WTC11 (cell line): ENCODE measurements at regions of chr9 and their contacts with region 1.

Region 1: DNA sequence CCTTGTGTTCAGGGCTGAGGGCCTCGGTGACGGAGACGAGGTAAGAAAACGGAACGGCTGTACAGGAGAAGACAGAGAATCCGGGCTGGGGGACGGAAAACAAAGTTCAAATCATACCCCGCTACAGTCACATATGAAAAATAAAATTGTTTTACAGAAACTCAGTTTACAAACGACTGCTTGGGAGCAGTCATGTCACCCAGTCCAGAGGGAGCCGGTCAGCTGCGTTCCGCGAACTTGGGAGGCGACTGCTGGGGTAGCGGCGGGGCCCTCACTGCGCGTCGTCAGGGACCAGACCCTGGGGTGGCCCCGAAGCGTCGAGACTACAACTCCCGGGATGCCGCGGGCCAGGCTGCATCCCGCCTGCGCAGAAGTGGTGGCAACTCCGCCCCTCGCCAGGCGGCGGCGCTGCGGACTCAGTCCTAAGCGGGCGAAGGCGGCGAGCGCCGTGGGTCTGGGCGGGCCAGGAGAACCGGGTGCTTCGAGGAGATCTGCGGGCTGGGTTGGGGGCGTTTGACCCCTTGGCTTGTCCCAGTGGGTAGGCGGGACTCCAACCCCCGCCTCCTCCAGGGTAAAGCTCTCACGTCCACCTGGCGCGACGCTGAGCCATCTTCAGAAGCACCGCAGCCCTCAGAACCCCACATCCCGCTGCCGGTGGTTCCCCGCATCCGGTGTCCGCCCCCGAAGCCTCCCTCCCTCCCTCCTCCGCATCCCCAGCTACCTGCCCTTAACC is 4.0 kb downstream of the SIT1 start:
- DNase-seq: peak; percentile 96
- ATAC-seq: peak; percentile 89
- H3K4me3 Mint-ChIP-seq: peak overlapping the region; percentile 88
- H3K27ac Mint-ChIP-seq: peak overlapping the region; percentile 82
- H3K4me1 Mint-ChIP-seq: peaks cover 43% of the 10 kb centered on the region
- H3K27me3 Mint-ChIP-seq: peaks cover 13% of the 10 kb centered on the region
- CTCF ChIP-seq: peak; percentile 90

Region 2: GRCh38 chr9:35367451-35367850 is 279.2 kb before region 1 on chr9:
- CTCF ChIA-PET with region 1: no interaction called
- POLR2A ChIA-PET with region 1: no interaction called
- DNase-seq: no peak
- ATAC-seq: no peak
- H3K4me3 Mint-ChIP-seq: no peak overlapping the region
- H3K27ac Mint-ChIP-seq: no peak overlapping the region
- H3K4me1 Mint-ChIP-seq: peaks cover 2% of the 10 kb centered on the region
- H3K27me3 Mint-ChIP-seq: no peaks in the 10 kb centered on the region
- CTCF ChIP-seq: no peak

Region 3: DNA sequence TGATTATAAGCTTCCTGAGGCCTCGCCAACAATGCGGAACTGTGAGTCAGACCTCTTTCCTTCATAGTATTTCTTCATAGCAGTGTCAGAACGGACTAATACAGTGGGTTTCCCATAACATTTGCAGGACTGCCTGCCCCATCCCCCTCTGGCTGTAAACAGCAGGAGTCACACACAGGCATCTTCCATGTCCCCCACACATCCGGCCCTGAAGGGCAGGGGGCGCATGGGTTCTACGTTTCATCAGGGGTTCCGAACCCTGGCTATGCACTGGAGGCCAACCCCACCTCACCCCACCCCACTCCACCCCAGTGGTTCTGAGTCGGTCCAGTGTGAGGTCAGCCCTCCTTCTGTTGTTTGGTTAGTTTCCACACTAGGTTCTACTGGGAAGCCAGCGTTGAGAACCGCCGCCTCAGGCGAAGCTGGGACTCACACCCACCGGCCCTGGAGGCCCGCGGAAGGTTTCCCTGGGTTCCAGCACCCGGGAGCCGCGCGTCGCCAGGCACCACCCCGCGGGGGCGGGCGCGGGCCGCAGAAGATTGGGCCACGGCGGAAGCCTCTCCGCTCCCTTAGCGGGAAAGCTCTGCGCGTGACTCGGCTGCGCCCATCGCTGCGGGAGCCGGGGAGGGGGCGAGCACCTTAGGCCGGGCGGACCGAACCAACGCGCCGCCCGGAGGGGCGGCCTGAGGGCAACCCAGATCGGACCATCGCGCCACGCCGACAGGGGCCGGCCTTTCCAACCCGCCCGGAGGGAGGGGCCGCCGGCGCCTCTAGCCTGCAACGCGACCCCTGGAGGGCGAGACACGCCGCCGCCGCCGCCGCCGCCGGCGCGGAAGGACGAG is 157.2 kb before region 1 on chr9 and contains the start of gene RUSC2:
- CTCF ChIA-PET with region 1: no interaction called
- POLR2A ChIA-PET with region 1: no interaction called
- DNase-seq: peak; percentile 87
- ATAC-seq: peak; percentile 83
- H3K4me3 Mint-ChIP-seq: peak within 1 kb of the TSS; percentile 90
- H3K27ac Mint-ChIP-seq: peak within 1 kb of the TSS; percentile 80
- H3K4me1 Mint-ChIP-seq: peaks cover 32% of the 10 kb centered on the region
- H3K27me3 Mint-ChIP-seq: peaks cover 4% of the 10 kb centered on the region; the same call in 1 of the 2 replicates
- CTCF ChIP-seq: no peak
- total RNA-seq, gene RUSC2: 7.3 to 9.4 TPM (median 8.7 TPM) in 3 replicates

Region 4: GRCh38 chr9:35603987-35604577 is 42.6 kb before region 1 on chr9:
- CTCF ChIA-PET with region 1: interaction called, 24 read pairs
- POLR2A ChIA-PET with region 1: interaction called, 4 read pairs
- DNase-seq: peak; percentile 99
- ATAC-seq: peak; percentile 89
- H3K4me3 Mint-ChIP-seq: peak overlapping the region; percentile 99
- H3K27ac Mint-ChIP-seq: peak overlapping the region; percentile 100
- H3K4me1 Mint-ChIP-seq: peaks cover 25% of the 10 kb centered on the region
- H3K27me3 Mint-ChIP-seq: peaks cover 5% of the 10 kb centered on the region
- CTCF ChIP-seq: peak; percentile 83

Region 5: DNA sequence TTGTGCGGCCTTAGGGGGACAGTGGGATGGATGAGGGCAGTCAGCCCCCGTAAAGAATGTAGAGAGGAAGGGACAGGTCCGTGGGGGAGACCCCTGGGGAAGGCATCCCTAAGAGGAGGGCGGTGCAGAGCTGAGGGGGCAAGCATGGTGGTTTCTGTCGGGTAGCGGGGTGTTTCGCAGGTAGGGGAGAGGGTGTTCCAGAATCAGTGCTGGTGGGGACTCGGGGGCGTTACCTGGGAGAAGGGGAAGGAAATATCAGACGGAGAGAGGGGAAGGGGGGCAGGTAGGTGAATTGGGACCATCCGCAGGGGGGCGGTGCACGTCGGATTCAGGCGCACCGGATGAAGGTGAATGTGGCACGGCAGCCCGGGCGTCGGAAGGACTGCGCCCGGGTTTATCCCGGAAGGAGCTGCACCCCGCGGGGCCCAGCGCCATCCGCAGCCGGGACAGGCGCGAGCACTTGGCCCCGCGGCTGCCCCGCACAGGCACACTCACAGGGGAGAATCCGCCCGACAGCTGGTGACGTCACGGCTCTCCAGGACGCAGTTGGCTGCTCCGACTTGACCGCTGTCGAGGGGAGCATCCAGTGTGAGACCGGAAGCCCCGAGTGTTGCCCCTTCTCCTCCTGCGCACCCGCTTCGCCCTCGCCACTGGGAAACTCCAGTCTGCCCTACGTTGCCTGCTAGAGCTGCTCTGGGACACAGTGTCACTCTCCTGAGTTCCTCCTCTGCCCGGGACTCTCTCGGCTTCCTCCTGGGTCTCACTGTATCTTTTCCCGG is 29.8 kb before region 1 on chr9:
- CTCF ChIA-PET with region 1: interaction called, 42 read pairs
- POLR2A ChIA-PET with region 1: interaction called, 4 read pairs
- DNase-seq: peak; percentile 66
- ATAC-seq: peak; percentile 80
- H3K4me3 Mint-ChIP-seq: peak overlapping the region; percentile 73
- H3K27ac Mint-ChIP-seq: no peak overlapping the region
- H3K4me1 Mint-ChIP-seq: peaks cover 9% of the 10 kb centered on the region
- H3K27me3 Mint-ChIP-seq: peaks cover 66% of the 10 kb centered on the region
- CTCF ChIP-seq: no peak

Region 6: GRCh38 chr9:35657546-35658136 is 10.9 kb after region 1 on chr9 and contains the start of gene RMRP:
- CTCF ChIA-PET with region 1: interaction called, 47 read pairs
- POLR2A ChIA-PET with region 1: interaction called, 21 read pairs
- DNase-seq: peak; percentile 96
- ATAC-seq: peak; percentile 90
- H3K4me3 Mint-ChIP-seq: peak within 1 kb of the TSS; percentile 85
- H3K27ac Mint-ChIP-seq: peak within 1 kb of the TSS; percentile 100
- H3K4me1 Mint-ChIP-seq: peaks cover 20% of the 10 kb centered on the region
- H3K27me3 Mint-ChIP-seq: peaks cover 23% of the 10 kb centered on the region
- CTCF ChIP-seq: no peak
- total RNA-seq, gene RMRP: 23,577 to 25,958 TPM (median 25,042 TPM) in 3 replicates

Region 7: DNA sequence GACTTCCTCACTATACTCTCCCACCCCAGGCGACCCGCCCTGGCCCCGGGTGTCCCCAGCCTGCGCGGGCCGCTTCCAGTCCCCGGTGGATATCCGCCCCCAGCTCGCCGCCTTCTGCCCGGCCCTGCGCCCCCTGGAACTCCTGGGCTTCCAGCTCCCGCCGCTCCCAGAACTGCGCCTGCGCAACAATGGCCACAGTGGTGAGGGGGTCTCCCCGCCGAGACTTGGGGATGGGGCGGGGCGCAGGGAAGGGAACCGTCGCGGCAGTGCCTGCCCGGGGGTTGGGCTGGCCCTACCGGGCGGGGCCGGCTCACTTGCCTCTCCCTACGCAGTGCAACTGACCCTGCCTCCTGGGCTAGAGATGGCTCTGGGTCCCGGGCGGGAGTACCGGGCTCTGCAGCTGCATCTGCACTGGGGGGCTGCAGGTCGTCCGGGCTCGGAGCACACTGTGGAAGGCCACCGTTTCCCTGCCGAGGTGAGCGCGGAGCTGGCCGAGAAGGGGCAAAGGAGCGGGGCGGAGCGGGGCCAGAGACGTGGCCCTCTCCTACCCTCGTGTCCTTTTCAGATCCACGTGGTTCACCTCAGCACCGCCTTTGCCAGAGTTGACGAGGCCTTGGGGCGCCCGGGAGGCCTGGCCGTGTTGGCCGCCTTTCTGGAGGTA is 29.2 kb after region 1 on chr9:
- CTCF ChIA-PET with region 1: interaction called, 17 read pairs
- POLR2A ChIA-PET with region 1: no interaction called
- DNase-seq: peak; percentile 95
- ATAC-seq: peak; percentile 92
- H3K4me3 Mint-ChIP-seq: peak overlapping the region; percentile 69
- H3K27ac Mint-ChIP-seq: no peak overlapping the region
- H3K4me1 Mint-ChIP-seq: peaks cover 15% of the 10 kb centered on the region
- H3K27me3 Mint-ChIP-seq: peaks cover 30% of the 10 kb centered on the region
- CTCF ChIP-seq: no peak